Vagina (tissue), 2 donors: ENCODE measurements at regions of chr14 and their contacts with region 1.

Region 1: DNA sequence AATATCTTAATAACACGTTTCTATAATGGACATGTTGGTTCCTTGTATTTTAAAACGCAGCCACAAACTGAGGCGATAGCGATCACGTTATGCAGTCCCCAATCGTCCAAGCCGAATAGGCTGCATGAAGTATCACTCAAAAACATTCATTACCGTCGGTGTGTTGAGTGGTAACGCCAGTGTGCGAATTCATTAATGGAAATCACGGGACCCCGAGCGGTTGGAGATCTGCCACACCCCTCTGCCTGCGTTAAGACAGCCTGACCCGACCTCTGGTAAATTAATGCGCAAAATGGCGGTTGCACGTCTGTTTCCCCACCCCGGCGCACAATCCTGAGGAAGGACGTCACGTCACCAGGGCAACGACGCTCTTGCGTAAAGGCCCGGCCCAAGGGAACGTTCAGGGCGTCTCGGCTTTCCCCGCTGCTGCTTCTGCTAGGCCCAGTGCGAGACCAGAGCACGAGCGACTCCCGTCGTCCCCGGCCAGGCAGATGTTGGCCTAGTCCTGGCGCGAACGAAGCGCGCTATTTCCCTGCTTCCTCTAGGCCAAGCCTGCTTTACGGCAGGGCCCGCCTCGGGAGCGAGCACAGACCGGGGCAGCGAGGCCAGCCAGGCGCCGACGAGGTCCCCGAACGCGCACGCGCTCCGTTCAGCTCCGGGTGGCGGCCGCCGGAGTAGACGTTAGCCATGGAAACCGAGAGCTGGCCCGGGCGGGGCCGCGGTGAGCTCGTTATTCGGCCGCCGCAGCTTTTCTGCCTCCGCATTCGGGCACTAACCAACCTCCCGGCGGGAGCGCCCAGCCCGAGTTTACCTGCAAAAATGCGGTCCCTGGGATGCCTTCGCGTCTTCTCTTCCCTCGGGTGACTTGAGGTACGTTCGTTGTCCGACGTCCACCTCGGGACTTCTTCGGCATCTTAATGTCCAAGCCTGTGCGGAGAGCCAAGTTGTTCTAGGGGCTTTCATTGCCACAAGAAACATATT is at the start of gene PCNX4:
- DNase-seq: peak in 1 of 2 donors; percentile 98
- H3K4me3 ChIP-seq: peak within 1 kb of the TSS; percentile 56 to 84
- H3K27ac ChIP-seq: peak within 1 kb of the TSS; percentile 84
- H3K4me1 ChIP-seq: peaks cover 41% of the 10 kb centered on the region
- H3K27me3 ChIP-seq: no peaks in the 10 kb centered on the region
- CTCF ChIP-seq: no peak
- POLR2A ChIP-seq: peak in 1 of 2 donors; percentile 87
- total RNA-seq, gene PCNX4: 51.6 TPM

Region 2: DNA sequence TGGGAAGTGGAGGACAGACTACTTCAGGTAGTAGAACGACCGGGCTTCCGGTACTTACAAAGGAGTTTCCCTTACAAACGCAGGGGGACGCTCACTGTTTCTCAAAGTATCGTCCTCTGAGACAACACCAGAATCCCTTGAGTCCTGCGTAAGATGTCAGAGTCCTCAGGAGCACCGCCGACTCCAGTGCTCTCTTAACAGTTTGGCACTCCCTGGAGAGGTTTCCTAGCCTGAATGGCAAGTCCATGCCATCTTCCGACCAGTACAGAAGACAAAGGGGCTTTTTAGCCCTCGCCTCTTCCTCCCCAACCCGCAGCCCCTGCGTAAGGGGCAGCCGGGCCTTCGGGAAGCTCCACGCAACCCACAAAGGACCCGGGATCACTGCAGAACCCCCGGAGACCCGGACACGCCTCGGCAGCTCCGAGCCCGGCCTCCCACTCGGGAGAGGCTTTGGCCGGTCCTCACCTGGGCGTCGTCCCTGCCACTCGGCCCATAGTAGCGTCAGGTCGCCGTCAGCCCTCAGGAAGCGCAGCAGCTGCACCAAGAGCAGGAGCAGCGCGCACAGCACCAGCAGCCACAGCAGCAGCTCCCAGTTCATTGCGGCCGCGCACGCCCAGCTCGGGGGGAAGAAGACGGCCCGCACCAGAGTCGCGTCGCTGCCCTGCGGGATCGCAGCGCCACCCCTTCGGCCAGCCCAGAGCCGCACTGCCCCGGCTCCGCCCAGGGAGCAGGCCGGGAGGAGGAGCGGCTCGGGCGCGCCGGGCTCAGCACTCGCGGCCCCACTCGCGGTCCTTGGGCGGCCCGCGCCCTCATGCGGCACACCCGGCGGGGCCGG is 73.1 kb after region 1 on chr14 and contains the start of gene DHRS7:
- intact Hi-C with region 1: loop called (anchors 2 kb)
- DNase-seq: no peak
- H3K4me3 ChIP-seq: peak within 1 kb of the TSS; percentile 60 to 83
- H3K27ac ChIP-seq: peak within 1 kb of the TSS; percentile 96
- H3K4me1 ChIP-seq: peaks cover 20% of the 10 kb centered on the region
- H3K27me3 ChIP-seq: no peaks in the 10 kb centered on the region
- CTCF ChIP-seq: peak in 2 of 3 experiments; percentile 25 to 53
- POLR2A ChIP-seq: peak in 1 of 2 donors; percentile 53
- total RNA-seq, gene DHRS7: 43.0 TPM

Region 3: DNA sequence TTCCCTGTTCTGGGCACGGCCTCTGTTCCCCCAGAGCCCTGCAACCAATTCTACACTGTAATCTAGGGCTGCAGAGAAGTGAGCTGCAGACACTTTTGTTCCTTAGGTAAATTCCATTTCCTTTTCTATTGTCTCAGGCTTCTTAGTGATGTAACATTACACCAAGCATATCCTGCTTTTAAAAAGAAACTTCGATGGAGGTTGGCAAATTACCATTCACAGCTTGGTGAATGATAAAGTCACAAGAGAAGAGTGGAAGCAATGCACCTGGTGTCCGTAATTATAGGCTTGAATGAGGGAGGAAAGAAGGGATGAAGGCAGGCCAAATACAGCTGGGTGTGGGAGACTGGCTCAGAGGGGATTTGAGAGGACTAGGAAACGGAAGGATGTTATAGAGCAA is 225.8 kb after region 1 on chr14:
- intact Hi-C with region 1: no loop called
- DNase-seq: no peak
- H3K4me3 ChIP-seq: no peak overlapping the region
- H3K27ac ChIP-seq: no peak overlapping the region
- H3K4me1 ChIP-seq: no peaks in the 10 kb centered on the region
- H3K27me3 ChIP-seq: no peaks in the 10 kb centered on the region
- CTCF ChIP-seq: no peak
- POLR2A ChIP-seq: no peak